Right cardiac atrium (tissue), 5 donors: ENCODE measurements at regions of chr20 and their contacts with region 1.

Region 1: GRCh38 chr20:20568604-20569205 is 143.7 kb downstream of the RALGAPA2 start:
- DNase-seq: no peak
- ATAC-seq: no peak
- H3K4me3 ChIP-seq: no peak overlapping the region
- H3K27ac ChIP-seq: no peak overlapping the region
- H3K4me1 ChIP-seq: no peaks in the 10 kb centered on the region
- H3K27me3 ChIP-seq: no peaks in the 10 kb centered on the region

Region 2: DNA sequence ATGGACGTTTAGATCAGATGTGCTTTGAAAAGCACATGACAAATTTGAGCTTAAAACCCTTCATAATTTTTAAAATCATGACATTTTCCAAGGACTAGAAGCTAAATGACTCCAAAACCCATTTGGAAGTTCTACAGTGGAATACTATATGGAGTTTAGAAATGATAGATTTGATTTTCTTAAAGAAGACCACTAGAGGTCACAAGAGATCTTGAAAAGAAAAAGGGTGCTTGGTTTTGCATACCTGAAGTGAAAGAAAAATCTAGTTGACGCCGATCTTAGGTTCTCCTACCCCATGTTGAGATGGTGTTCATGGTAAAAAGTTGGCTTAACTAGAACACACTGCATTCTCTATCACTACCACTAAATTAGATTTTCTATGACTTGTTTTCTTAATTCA is 484.9 kb before region 1 on chr20:
- intact Hi-C with region 1: loop called in 2 of 4 experiments (anchors 5 kb)
- DNase-seq: no peak
- ATAC-seq: peak; percentile 45 to 47
- H3K4me3 ChIP-seq: no peak overlapping the region
- H3K27ac ChIP-seq: no peak overlapping the region
- H3K4me1 ChIP-seq: no peaks in the 10 kb centered on the region
- H3K27me3 ChIP-seq: no peaks in the 10 kb centered on the region

Region 3: DNA sequence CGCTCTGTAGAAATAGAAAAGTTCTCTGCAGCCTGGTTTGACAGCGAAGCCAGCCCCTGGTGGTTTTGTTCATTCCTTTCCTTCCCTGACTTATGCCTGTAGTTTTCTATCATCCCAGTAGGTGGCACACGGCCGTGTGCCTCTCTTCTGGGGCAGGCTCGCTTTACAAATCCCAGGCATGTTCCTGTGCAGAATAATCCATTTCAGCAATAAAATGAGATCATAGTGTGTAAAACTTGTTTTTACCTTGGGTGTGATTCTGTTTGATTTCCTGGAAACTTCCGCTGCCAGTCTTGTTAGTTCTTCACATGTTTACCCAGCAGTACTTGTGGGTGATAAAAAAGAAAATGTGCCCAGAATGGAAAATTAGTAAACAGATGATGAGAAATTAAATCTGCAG is 208.2 kb before region 1 on chr20:
- intact Hi-C with region 1: loop called in 3 of 4 experiments (anchors 5 to 10 kb)
- DNase-seq: peak in 1 of 3 donors; percentile 50
- ATAC-seq: peak; percentile 78 to 80
- H3K4me3 ChIP-seq: no peak overlapping the region
- H3K27ac ChIP-seq: no peak overlapping the region
- H3K4me1 ChIP-seq: no peaks in the 10 kb centered on the region
- H3K27me3 ChIP-seq: no peaks in the 10 kb centered on the region

Region 4: GRCh38 chr20:20369250-20370093 is 199.2 kb before region 1 on chr20:
- intact Hi-C with region 1: loop called in 3 of 4 experiments (anchors 5 to 10 kb)
- DNase-seq: no peak
- ATAC-seq: peak in 1 of 2 donors; percentile 33
- H3K4me3 ChIP-seq: no peak overlapping the region
- H3K27ac ChIP-seq: no peak overlapping the region
- H3K4me1 ChIP-seq: peaks cover 4% of the 10 kb centered on the region
- H3K27me3 ChIP-seq: peaks cover 6% of the 10 kb centered on the region

Region 5: DNA sequence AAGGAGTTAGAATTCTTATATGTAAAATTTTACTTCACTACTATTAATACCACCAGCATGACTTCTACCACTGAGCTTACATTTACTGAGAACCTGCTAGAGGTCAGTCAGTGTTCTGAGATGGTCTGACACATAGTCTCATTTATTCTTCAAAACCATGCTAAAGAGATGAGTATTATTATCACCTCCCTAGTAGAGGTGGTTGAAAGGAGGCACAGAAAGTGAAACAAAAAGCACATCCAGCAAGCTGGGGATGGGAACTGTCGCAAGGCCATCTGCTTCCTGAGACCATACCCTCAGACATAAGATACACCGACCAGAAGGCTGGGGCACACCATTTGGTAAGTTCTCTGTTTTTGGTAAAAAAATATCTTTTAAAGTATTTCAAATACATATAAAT is 63.2 kb before region 1 on chr20:
- intact Hi-C with region 1: no loop called
- DNase-seq: no peak
- ATAC-seq: no peak
- H3K4me3 ChIP-seq: no peak overlapping the region
- H3K27ac ChIP-seq: no peak overlapping the region
- H3K4me1 ChIP-seq: no peaks in the 10 kb centered on the region
- H3K27me3 ChIP-seq: no peaks in the 10 kb centered on the region